Activated naive CD4-positive, alpha-beta T cell treated with anti-CD3 and anti-CD28 coated beads, Interleukin-2, amount 10 ng/mL, durations not matched to agents 7 days and 5 days (primary cell): ENCODE measurements at regions of chr3 and their contacts with region 1.

Region 1: GRCh38 chr3:111691293-111691909 is 96.3 kb upstream of the ZBED2 start:
- DNase-seq: no peak
- H3K4me3 Mint-ChIP-seq: no peak overlapping the region
- H3K27ac Mint-ChIP-seq: no peak overlapping the region
- H3K4me1 Mint-ChIP-seq: peaks cover 42% of the 10 kb centered on the region
- H3K27me3 Mint-ChIP-seq: no peaks in the 10 kb centered on the region

Region 2: GRCh38 chr3:111668912-111669488 is 22.4 kb before region 1 on chr3:
- CTCF ChIA-PET with region 1: interaction called, 120 read pairs
- DNase-seq: no peak
- H3K4me3 Mint-ChIP-seq: no peak overlapping the region
- H3K27ac Mint-ChIP-seq: peak overlapping the region; percentile 83
- H3K4me1 Mint-ChIP-seq: peaks cover 85% of the 10 kb centered on the region
- H3K27me3 Mint-ChIP-seq: no peaks in the 10 kb centered on the region

Region 3: DNA sequence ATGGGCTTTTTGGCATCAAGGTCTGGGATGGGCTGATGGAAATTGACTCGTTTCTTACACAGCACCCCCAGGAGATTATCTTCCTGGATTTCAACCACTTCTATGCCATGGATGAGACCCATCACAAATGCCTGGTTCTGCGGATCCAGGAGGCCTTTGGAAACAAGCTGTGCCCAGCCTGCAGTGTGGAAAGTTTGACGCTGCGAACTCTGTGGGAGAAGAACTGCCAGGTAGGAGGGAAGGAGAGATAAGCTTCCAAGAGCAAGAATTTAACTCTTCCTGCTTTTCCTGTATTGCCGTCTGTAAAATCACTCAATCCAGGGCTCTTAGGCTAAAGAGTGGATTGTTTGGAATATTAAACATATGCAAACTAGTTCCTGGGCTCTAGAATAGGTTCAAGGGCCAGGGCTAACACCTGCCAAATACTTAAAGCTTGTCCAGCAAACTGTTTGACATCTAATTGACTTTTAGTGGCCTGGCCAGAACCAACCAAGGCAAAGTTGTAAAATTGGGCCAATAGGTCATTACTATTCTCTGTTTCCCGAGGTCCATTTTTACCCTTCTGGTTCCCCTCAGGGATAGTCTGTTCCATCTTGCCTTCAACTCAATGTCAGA is 16.9 kb after region 1 on chr3:
- CTCF ChIA-PET with region 1: interaction called, 13 read pairs
- DNase-seq: no peak
- H3K4me3 Mint-ChIP-seq: no peak overlapping the region
- H3K27ac Mint-ChIP-seq: no peak overlapping the region
- H3K4me1 Mint-ChIP-seq: peaks cover 7% of the 10 kb centered on the region
- H3K27me3 Mint-ChIP-seq: no peaks in the 10 kb centered on the region

Region 4: DNA sequence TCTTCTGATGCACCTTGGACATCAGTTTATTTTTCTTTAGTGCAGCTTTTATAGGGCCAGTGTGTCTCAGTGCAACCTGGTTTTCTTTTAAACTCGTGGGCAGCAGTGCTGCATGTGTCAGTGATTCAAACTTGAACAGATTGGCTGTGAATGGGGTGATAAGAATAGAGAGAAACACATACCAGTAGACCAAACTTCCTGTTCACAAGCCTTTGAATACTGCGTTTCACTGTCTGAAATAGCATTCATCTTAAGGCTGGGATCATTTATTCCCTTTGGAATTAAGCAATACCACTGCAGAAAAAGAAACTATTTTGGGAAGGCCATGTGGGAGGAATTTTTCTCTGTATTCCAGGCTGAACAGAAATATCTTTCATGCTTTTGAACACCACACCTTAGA is 219.4 kb after region 1 on chr3:
- CTCF ChIA-PET with region 1: no interaction called
- DNase-seq: no peak
- H3K4me3 Mint-ChIP-seq: no peak overlapping the region
- H3K27ac Mint-ChIP-seq: no peak overlapping the region
- H3K4me1 Mint-ChIP-seq: no peaks in the 10 kb centered on the region
- H3K27me3 Mint-ChIP-seq: peaks cover 16% of the 10 kb centered on the region